Esophagus muscularis mucosa (tissue), 4 donors: ENCODE measurements at regions of chr18 and their contacts with region 1.

Region 1: DNA sequence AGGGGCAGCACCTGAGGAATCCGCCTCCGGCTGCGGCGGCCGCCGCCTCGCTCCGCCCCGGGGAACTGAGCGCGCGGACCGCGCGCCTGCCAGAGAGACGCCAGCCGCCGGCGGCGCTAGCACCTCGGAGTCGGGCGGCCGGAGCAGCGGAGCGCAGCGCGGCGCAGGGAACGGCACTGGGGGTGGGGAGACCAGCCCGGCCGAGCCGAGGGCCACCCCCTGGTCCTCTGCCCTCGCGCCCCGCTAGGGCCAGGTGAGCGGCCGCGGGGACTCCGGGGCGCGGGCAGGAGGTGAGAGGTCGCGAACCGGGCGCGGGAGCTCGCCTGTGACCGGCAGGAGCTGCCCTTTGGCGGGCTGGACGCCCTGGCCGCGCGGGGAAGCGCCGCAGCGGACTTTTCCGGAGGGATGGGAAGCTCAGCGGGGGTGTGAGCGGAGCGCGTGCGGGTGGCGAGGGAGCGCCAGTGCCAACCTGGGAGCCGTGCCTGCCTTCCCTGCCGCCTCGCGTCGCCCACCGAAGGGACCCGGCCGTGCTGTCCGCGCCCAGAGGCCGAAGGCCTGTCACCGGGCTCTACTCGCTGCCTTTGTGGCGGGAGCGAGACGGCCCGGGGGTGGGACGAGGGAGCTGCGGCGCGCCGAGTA is at the start of gene GREB1L:
- DNase-seq: no peak
- H3K4me3 ChIP-seq: peak within 1 kb of the TSS; percentile 66 to 83 (median 76)
- H3K27ac ChIP-seq: peak within 1 kb of the TSS; percentile 73 to 81 (median 76)
- H3K4me1 ChIP-seq: peaks cover 0 to 29% (median 29%) of the 10 kb centered on the region in 4 donors
- H3K27me3 ChIP-seq: peaks cover 0 to 37% (median 3%) of the 10 kb centered on the region in 4 donors
- CTCF ChIP-seq: peak in 2 of 3 experiments; percentile 45 to 50
- EP300 ChIP-seq: no peak
- POLR2A ChIP-seq: no peak
- total RNA-seq, gene GREB1L: 13.2 to 16.0 (median 14.5) TPM

Region 2: GRCh38 chr18:21191596-21192307 is 50.5 kb before region 1 on chr18:
- intact Hi-C with region 1: no loop called
- DNase-seq: no peak
- H3K4me3 ChIP-seq: no peak overlapping the region
- H3K27ac ChIP-seq: no peak overlapping the region
- H3K4me1 ChIP-seq: peaks cover 0 to 6% (median 2%) of the 10 kb centered on the region in 4 donors
- H3K27me3 ChIP-seq: no peaks in the 10 kb centered on the region
- CTCF ChIP-seq: peak; percentile 35 to 65 (median 57)
- EP300 ChIP-seq: no peak
- POLR2A ChIP-seq: no peak

Region 3: GRCh38 chr18:21444465-21445023 is 202.3 kb after region 1 on chr18:
- intact Hi-C with region 1: loop called (anchors 5 kb)
- DNase-seq: no peak
- H3K4me3 ChIP-seq: no peak overlapping the region
- H3K27ac ChIP-seq: no peak overlapping the region
- H3K4me1 ChIP-seq: peaks cover 0 to 3% (median 0%) of the 10 kb centered on the region in 4 donors
- H3K27me3 ChIP-seq: no peaks in the 10 kb centered on the region
- CTCF ChIP-seq: peak; percentile 55 to 71 (median 66)
- EP300 ChIP-seq: no peak
- POLR2A ChIP-seq: no peak